SK-N-SH (cell line): ENCODE measurements at regions of chr2 and their contacts with region 1.

Region 1: DNA sequence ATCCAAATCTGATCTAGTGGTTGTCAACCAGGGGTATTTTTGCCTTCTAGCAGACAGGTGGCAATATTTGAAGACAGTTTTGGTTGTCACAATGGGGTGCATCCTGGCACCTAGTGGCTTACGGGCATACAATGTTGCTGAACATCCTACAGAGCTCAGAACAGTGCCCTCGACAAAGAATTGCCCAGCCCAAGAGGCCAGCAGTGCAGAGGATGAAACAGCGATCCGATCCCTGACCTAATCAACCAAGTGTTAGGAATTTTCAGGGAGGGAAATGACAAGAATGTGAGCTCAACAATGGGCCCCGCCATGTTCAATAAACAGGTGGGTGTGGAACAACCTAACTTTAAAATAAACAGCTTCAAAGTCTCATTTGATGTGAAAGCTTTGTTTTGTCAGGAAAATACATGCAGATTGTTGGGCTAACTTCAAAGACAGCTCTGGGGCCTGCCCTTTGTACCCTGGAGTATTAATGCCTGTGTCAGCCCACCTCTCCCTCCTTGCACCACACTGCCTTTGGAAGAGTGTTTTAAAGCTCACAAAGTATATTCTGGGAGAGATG is 22.5 kb upstream of the SCYGR5 start:
- DNase-seq: no peak
- H3K4me3 ChIP-seq: no peak overlapping the region
- H3K27ac ChIP-seq: no peak overlapping the region
- H3K4me1 ChIP-seq: no peaks in the 10 kb centered on the region
- H3K27me3 ChIP-seq: no peaks in the 10 kb centered on the region
- CTCF ChIP-seq: no peak
- EP300 ChIP-seq: no peak
- RAD21 ChIP-seq: no peak

Region 2: GRCh38 chr2:227655454-227655853 is 11.4 kb after region 1 on chr2:
- CTCF ChIA-PET with region 1: interaction called, 18 read pairs
- POLR2A ChIA-PET with region 1: no interaction called
- DNase-seq: no peak
- H3K4me3 ChIP-seq: no peak overlapping the region
- H3K27ac ChIP-seq: no peak overlapping the region
- H3K4me1 ChIP-seq: no peaks in the 10 kb centered on the region
- H3K27me3 ChIP-seq: no peaks in the 10 kb centered on the region
- CTCF ChIP-seq: no peak
- EP300 ChIP-seq: peak in 1 of 2 experiments; percentile 35; a peak in 1 of 4 replicates
- RAD21 ChIP-seq: no peak